Endothelial cell of umbilical vein (primary cell): ENCODE measurements at regions of chr11 and their contacts with region 1.

Region 1: GRCh38 chr11:6505577-6506240 is 8.6 kb downstream of the DNHD1 start:
- DNase-seq: peak; percentile 67
- H3K4me3 ChIP-seq: no peak overlapping the region
- H3K27ac ChIP-seq: no peak overlapping the region
- H3K4me1 ChIP-seq: no peaks in the 10 kb centered on the region
- H3K27me3 ChIP-seq: no peaks in the 10 kb centered on the region
- CTCF ChIP-seq: peak; percentile 58 to 66
- POLR2A ChIP-seq: no peak

Region 2: DNA sequence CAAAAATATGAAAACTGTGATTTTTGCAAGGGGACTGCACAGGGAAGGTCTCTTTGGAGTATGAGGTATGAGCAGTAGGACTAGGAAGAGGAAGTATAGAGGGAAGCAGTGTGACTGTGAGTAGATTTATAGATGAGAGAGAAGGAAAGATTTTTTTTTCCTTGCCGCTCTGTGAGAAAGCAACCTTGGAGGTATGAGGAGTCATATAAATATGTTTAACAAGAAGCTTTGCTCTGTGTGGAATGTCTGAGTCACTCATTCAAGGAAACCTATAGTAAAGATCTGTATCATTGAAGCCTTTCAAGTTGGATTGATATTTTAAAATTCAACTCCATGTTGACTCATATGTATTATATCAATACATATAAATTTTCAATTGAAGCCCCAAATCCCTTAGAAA is 17.5 kb after region 1 on chr11:
- CTCF ChIA-PET with region 1: interaction called, 13 read pairs
- POLR2A ChIA-PET with region 1: no interaction called
- dilution Hi-C with region 1: no loop called
- intact Hi-C with region 1: no loop called
- DNase-seq: peak; percentile 53
- H3K4me3 ChIP-seq: no peak overlapping the region
- H3K27ac ChIP-seq: no peak overlapping the region
- H3K4me1 ChIP-seq: peaks cover 10% of the 10 kb centered on the region
- H3K27me3 ChIP-seq: no peaks in the 10 kb centered on the region
- CTCF ChIP-seq: no peak
- POLR2A ChIP-seq: no peak